H1 (cell line): ENCODE measurements at regions of chr12 and their contacts with region 1.

Region 1: DNA sequence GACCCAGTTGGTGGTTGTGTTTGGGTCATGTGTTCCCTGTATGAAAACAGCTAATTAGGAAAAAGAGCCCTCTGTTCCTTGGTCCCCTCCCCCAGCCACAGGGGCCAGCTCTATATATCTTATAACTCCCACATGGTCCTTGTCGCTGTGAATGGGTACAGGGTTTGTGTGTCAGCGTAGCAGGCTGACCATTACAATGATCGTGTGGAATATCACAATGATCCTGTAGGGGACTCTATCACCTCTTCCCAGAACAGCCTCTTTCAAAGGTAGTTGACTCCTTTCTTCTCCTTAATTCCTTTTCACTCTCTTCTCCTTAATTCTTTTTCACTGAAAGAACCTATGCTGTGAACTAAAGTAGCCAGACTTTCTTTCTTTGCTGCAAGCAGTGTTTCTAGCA is 51.6 kb upstream of the RIC8B start:
- DNase-seq: no peak
- H3K4me3 ChIP-seq: no peak overlapping the region
- H3K27ac ChIP-seq: no peak overlapping the region
- H3K4me1 ChIP-seq: peaks cover 0 to 6% (median 2%) of the 10 kb centered on the region in 4 experiments; a peak in 3 of 7 replicates
- H3K27me3 ChIP-seq: no peaks in the 10 kb centered on the region
- CTCF ChIP-seq: peak in 2 of 3 experiments; percentile 24 to 54; a peak in 2 of 4 replicates
- EP300 ChIP-seq: no peak
- POLR2A ChIP-seq: no peak
- RAD21 ChIP-seq: peak; percentile 60 to 64

Region 2: GRCh38 chr12:106461730-106462129 is 261.1 kb before region 1 on chr12:
- CTCF ChIA-PET with region 1: no interaction called
- POLR2A ChIA-PET with region 1: no interaction called
- DNase-seq: no peak
- H3K4me3 ChIP-seq: no peak overlapping the region
- H3K27ac ChIP-seq: no peak overlapping the region
- H3K4me1 ChIP-seq: no peaks in the 10 kb centered on the region
- H3K27me3 ChIP-seq: no peaks in the 10 kb centered on the region
- CTCF ChIP-seq: no peak
- EP300 ChIP-seq: no peak
- POLR2A ChIP-seq: no peak
- RAD21 ChIP-seq: no peak

Region 3: GRCh38 chr12:106710143-106710893 is 12.5 kb before region 1 on chr12:
- CTCF ChIA-PET with region 1: interaction called, 17 read pairs
- POLR2A ChIA-PET with region 1: no interaction called
- DNase-seq: no peak
- H3K4me3 ChIP-seq: peak overlapping the region in 1 of 4 experiments; percentile 37; a peak in 1 of 8 replicates
- H3K27ac ChIP-seq: no peak overlapping the region
- H3K4me1 ChIP-seq: peaks cover 2 to 23% (median 19%) of the 10 kb centered on the region in 4 experiments; a peak in 5 of 7 replicates
- H3K27me3 ChIP-seq: peaks cover 0 to 2% (median 0%) of the 10 kb centered on the region in 4 experiments; a peak in 1 of 7 replicates
- CTCF ChIP-seq: no peak
- EP300 ChIP-seq: no peak
- POLR2A ChIP-seq: no peak
- RAD21 ChIP-seq: no peak

Region 4: GRCh38 chr12:106739815-106740530 is 17.1 kb after region 1 on chr12:
- CTCF ChIA-PET with region 1: interaction called, 15 read pairs
- POLR2A ChIA-PET with region 1: interaction called, 3 read pairs
- DNase-seq: no peak
- H3K4me3 ChIP-seq: no peak overlapping the region
- H3K27ac ChIP-seq: no peak overlapping the region
- H3K4me1 ChIP-seq: peaks cover 0 to 16% (median 12%) of the 10 kb centered on the region in 4 experiments; a peak in 6 of 7 replicates
- H3K27me3 ChIP-seq: no peaks in the 10 kb centered on the region
- CTCF ChIP-seq: no peak
- EP300 ChIP-seq: no peak
- POLR2A ChIP-seq: no peak
- RAD21 ChIP-seq: no peak

Region 5: GRCh38 chr12:106841510-106842302 is 118.9 kb after region 1 on chr12:
- CTCF ChIA-PET with region 1: interaction called, 10 read pairs
- POLR2A ChIA-PET with region 1: no interaction called
- DNase-seq: no peak
- H3K4me3 ChIP-seq: no peak overlapping the region
- H3K27ac ChIP-seq: no peak overlapping the region
- H3K4me1 ChIP-seq: peaks cover 2 to 8% (median 4%) of the 10 kb centered on the region in 4 experiments; a peak in 4 of 7 replicates
- H3K27me3 ChIP-seq: no peaks in the 10 kb centered on the region
- CTCF ChIP-seq: peak in 2 of 3 experiments; percentile 40 to 50; a peak in 2 of 4 replicates
- EP300 ChIP-seq: no peak
- POLR2A ChIP-seq: no peak
- RAD21 ChIP-seq: peak; percentile 67 to 74